T-cell (primary cell): ENCODE measurements at regions of chr7 and their contacts with region 1.

Region 1: GRCh38 chr7:43470110-43470509 is 112.8 kb upstream of the STK17A start:
- DNase-seq: no peak
- ATAC-seq: no peak
- H3K4me3 ChIP-seq: no peak overlapping the region
- H3K4me3 Mint-ChIP-seq: no peak overlapping the region
- H3K27ac ChIP-seq: no peak overlapping the region
- H3K27ac Mint-ChIP-seq: no peak overlapping the region
- H3K4me1 ChIP-seq: no peaks in the 10 kb centered on the region
- H3K4me1 Mint-ChIP-seq: peaks cover 0 to 11% (median 4%) of the 10 kb centered on the region in 3 donors
- H3K27me3 ChIP-seq: peaks cover 0 to 9% of the 10 kb centered on the region in 2 experiments
- H3K27me3 Mint-ChIP-seq: peaks cover 15 to 22% of the 10 kb centered on the region in 2 donors

Region 2: GRCh38 chr7:43260980-43261878 is 208.9 kb before region 1 on chr7:
- CTCF ChIA-PET with region 1: no interaction called
- POLR2A ChIA-PET with region 1: interaction called in 1 of 2 experiments, 10 read pairs
- DNase-seq: peak in 34 of 35 experiments; percentile 1 to 71 (median 33)
- ATAC-seq: peak in 1 of 4 experiments; percentile 45
- H3K4me3 ChIP-seq: no peak overlapping the region
- H3K4me3 Mint-ChIP-seq: no peak overlapping the region
- H3K27ac ChIP-seq: no peak overlapping the region
- H3K27ac Mint-ChIP-seq: no peak overlapping the region
- H3K4me1 ChIP-seq: no peaks in the 10 kb centered on the region
- H3K4me1 Mint-ChIP-seq: no peaks in the 10 kb centered on the region
- H3K27me3 ChIP-seq: peaks cover 0 to 3% of the 10 kb centered on the region in 2 experiments
- H3K27me3 Mint-ChIP-seq: peaks cover 14 to 17% of the 10 kb centered on the region in 2 donors

Region 3: GRCh38 chr7:43454936-43455518 is 15.1 kb before region 1 on chr7:
- CTCF ChIA-PET with region 1: no interaction called
- POLR2A ChIA-PET with region 1: no interaction called
- DNase-seq: peak in 1 of 35 experiments; percentile 21
- ATAC-seq: no peak
- H3K4me3 ChIP-seq: no peak overlapping the region
- H3K4me3 Mint-ChIP-seq: no peak overlapping the region
- H3K27ac ChIP-seq: no peak overlapping the region
- H3K27ac Mint-ChIP-seq: no peak overlapping the region
- H3K4me1 ChIP-seq: no peaks in the 10 kb centered on the region
- H3K4me1 Mint-ChIP-seq: peaks cover 0 to 3% (median 3%) of the 10 kb centered on the region in 3 donors
- H3K27me3 ChIP-seq: no peaks in the 10 kb centered on the region
- H3K27me3 Mint-ChIP-seq: peaks cover 5 to 9% of the 10 kb centered on the region in 2 donors

Region 4: DNA sequence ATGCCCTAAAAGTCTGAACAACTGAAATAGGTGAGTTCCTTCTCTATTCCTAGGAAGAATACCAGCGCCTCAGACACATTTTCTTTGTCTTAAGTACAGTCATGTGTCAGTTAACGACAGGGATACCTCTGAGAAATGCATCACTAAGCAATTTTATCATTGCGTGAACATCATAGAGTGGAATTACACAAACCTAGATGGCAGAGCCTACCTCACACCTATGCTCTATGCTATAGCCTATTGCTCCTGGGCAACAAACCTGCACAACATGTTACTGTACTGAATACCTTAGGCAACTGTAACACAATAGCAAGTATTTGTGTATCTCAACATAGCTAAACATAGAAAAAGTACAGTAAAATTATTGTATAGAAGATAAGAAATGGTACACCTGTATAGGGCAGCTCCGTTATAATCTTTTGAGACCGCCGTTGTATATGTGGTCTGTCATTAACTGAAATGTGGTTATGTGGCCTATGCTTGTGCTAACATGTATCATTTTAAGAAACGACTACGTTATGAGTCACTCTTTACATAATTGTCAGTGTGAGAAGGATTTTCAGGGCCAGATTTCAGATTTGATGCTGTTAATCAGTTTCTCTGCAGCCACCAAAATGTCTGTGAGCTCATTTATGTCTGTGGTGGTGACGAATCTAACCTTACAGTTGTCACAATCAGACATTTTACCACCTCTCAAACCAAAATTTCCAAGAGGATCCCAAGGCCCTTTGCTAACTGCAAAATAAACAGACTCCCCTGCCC is 46.7 kb after region 1 on chr7:
- CTCF ChIA-PET with region 1: no interaction called
- POLR2A ChIA-PET with region 1: no interaction called
- DNase-seq: peak in 1 of 35 experiments; percentile 4
- ATAC-seq: peak in 1 of 4 experiments; percentile 52
- H3K4me3 ChIP-seq: no peak overlapping the region
- H3K4me3 Mint-ChIP-seq: no peak overlapping the region
- H3K27ac ChIP-seq: no peak overlapping the region
- H3K27ac Mint-ChIP-seq: no peak overlapping the region
- H3K4me1 ChIP-seq: no peaks in the 10 kb centered on the region
- H3K4me1 Mint-ChIP-seq: peaks cover 2 to 7% (median 4%) of the 10 kb centered on the region in 3 donors
- H3K27me3 ChIP-seq: peaks cover 0 to 4% of the 10 kb centered on the region in 2 experiments
- H3K27me3 Mint-ChIP-seq: peaks cover 9 to 29% of the 10 kb centered on the region in 2 donors